ENCODE measurements at regions of chr4 and their contacts with region 1.

Region 1: DNA sequence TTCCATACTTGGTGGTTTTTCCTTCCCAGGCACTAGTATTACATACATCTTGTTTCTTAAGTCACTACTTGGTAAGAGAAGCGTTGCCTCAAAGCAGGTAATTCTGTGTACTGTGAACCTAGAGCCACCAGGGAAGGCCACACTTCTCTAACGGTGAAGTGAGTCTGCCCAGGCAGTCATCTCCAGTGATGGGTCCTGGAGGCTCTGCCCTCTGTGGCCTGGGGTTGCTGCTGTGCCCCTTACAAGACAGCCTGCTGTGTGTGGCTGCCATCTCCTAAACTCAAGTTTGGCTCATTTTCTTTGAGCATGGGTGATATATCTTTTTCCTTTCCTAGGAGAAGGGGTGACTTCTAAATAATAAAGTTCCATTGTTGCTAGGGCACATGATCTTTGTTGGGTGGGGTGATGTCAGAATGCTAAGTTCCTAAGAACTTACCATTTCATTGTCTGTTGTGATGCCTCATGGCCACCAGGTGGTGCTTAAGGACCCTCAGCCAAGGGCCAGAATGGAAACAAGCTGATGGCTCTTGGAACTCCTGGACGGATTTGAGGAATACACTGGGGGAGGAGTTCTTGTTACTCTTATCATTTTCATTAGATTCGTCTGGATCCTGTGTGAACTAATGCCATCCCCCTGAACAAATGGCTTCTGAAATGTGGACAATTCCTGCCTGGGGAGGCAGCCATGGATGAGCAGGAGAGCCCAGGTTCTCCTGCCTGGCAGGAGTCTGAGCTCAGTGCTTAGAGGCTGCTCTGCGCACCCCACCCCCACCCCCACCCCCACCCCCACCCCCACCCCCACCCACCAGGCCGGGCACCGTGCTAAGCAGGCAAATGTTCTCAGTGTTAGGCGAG is 41.1 kb upstream of the WDR1 start:
- DNase-seq: peak; percentile 81
- H3K4me3 Mint-ChIP-seq: no peak overlapping the region
- H3K27ac Mint-ChIP-seq: peak overlapping the region; percentile 35
- H3K4me1 Mint-ChIP-seq: peaks cover 26% of the 10 kb centered on the region
- H3K27me3 Mint-ChIP-seq: peaks cover 4% of the 10 kb centered on the region

Region 2: GRCh38 chr4:10403633-10404445 is 246.1 kb after region 1 on chr4:
- intact Hi-C with region 1: loop called (anchors 2 kb)
- DNase-seq: peak; percentile 73
- H3K4me3 Mint-ChIP-seq: no peak overlapping the region
- H3K27ac Mint-ChIP-seq: no peak overlapping the region
- H3K4me1 Mint-ChIP-seq: no peaks in the 10 kb centered on the region
- H3K27me3 Mint-ChIP-seq: no peaks in the 10 kb centered on the region

Region 3: DNA sequence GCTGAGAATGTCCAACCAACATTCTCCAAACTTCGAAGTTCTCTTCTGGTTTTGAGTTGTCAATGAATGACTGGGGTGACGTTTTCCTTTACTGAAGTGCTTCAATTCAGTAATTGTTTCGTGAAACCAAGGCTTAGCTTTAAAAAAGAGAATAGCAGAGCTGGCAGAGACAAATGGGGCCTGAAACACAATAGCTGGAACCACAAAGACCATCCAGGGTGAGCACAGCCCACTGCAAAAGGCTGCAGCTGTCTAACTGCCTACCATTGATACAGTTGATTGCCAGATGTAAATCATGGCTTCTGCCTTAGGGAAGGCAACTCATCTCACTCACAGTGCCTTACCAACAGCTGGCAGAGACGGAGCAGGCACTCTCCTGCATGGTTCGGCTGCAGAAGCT is 378.2 kb after region 1 on chr4:
- intact Hi-C with region 1: loop called (anchors 1 kb)
- DNase-seq: no peak
- H3K4me3 Mint-ChIP-seq: no peak overlapping the region
- H3K27ac Mint-ChIP-seq: no peak overlapping the region
- H3K4me1 Mint-ChIP-seq: no peaks in the 10 kb centered on the region
- H3K27me3 Mint-ChIP-seq: peaks cover 9% of the 10 kb centered on the region